Mammary epithelial cell (primary cell): ENCODE measurements at regions of chr5 and their contacts with region 1.

Region 1: GRCh38 chr5:140647042-140647341 is 438 bp downstream of the NDUFA2 start:
- DNase-seq: no peak
- H3K4me3 ChIP-seq: peak overlapping the region; percentile 81 to 88 (median 81)
- H3K27ac ChIP-seq: peak overlapping the region; percentile 75
- H3K4me1 ChIP-seq: peaks cover 15% of the 10 kb centered on the region
- H3K27me3 ChIP-seq: no peaks in the 10 kb centered on the region
- CTCF ChIP-seq: no peak

Region 2: GRCh38 chr5:140547508-140548299 is 99.3 kb before region 1 on chr5 and contains the start of gene EIF4EBP3:
- CTCF ChIA-PET with region 1: no interaction called
- dilution Hi-C with region 1: loop called (anchors 5 kb)
- in situ Hi-C with region 1: no loop called
- intact Hi-C with region 1: no loop called
- DNase-seq: peak; percentile 87
- H3K4me3 ChIP-seq: peak within 1 kb of the TSS in 2 of 3 experiments; percentile 34 to 55
- H3K27ac ChIP-seq: no peak within 1 kb of the TSS
- H3K4me1 ChIP-seq: peaks cover 13% of the 10 kb centered on the region
- H3K27me3 ChIP-seq: no peaks in the 10 kb centered on the region
- CTCF ChIP-seq: peak; percentile 51 to 69
- total RNA-seq, gene EIF4EBP3: 1.8 to 6.0 TPM

Region 3: DNA sequence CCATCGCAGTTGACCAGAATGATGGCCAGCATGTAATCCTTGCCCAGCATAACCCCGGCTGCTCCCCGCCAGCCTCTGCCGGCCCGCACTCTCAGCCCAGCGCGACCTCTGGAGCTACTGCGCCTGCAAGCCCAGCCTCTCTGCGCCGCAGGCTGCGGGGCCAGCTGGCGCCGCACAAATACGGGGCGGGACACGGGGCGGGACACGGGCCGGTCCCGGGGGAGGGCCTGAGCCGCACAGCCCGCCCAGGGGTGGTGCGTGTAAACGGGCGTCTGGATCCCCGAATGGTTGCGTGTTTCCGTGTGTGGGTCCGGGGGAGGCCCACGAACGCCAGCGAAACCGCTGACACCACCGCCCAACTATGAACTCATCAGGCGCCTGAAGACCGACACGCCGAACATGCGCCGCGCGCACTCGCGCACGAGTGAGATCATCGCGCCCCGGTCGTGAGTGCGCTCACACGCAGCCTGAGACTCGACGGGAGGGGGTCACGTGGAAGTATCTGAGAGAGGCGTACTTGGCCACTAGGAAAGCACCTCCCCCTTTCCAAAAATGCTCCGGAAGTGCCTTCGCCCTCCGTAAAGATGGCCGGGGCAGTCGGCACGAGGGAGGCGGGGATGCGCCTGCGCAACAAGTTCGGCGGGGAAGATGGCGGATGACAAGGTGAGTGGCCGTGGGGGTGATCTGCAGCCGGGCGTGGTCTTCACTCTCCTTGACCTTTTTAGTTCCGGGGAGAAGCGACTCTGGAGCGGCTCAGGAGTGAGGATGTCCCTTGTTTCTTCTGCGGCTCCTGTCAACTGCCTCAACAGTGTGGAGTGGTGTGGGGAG is 82.6 kb before region 1 on chr5 and contains the starts of genes APBB3 and SLC35A4:
- CTCF ChIA-PET with region 1: no interaction called
- dilution Hi-C with region 1: loop called (anchors 5 kb)
- in situ Hi-C with region 1: no loop called
- intact Hi-C with region 1: loop called (anchors 1 kb)
- DNase-seq: peak; percentile 96
- H3K4me3 ChIP-seq: peak within 1 kb of the TSS; percentile 88 to 92 (median 90)
- H3K27ac ChIP-seq: peak within 1 kb of the TSS; percentile 82
- H3K4me1 ChIP-seq: peaks cover 18% of the 10 kb centered on the region
- H3K27me3 ChIP-seq: no peaks in the 10 kb centered on the region
- CTCF ChIP-seq: no peak
- total RNA-seq, gene APBB3: 12.2 to 18.4 TPM
- total RNA-seq, gene SLC35A4: 24.0 to 62.2 TPM

Region 4: GRCh38 chr5:140664359-140665119 is 17.5 kb after region 1 on chr5 and contains the start of gene WDR55:
- CTCF ChIA-PET with region 1: no interaction called
- dilution Hi-C with region 1: no loop called
- in situ Hi-C with region 1: no loop called
- intact Hi-C with region 1: loop called (anchors 1 kb)
- DNase-seq: peak; percentile 93
- H3K4me3 ChIP-seq: peak within 1 kb of the TSS; percentile 80 to 87 (median 83)
- H3K27ac ChIP-seq: peak within 1 kb of the TSS; percentile 75
- H3K4me1 ChIP-seq: peaks cover 3% of the 10 kb centered on the region
- H3K27me3 ChIP-seq: no peaks in the 10 kb centered on the region
- CTCF ChIP-seq: no peak
- total RNA-seq, gene WDR55: 18.3 to 26.8 TPM

Region 5: DNA sequence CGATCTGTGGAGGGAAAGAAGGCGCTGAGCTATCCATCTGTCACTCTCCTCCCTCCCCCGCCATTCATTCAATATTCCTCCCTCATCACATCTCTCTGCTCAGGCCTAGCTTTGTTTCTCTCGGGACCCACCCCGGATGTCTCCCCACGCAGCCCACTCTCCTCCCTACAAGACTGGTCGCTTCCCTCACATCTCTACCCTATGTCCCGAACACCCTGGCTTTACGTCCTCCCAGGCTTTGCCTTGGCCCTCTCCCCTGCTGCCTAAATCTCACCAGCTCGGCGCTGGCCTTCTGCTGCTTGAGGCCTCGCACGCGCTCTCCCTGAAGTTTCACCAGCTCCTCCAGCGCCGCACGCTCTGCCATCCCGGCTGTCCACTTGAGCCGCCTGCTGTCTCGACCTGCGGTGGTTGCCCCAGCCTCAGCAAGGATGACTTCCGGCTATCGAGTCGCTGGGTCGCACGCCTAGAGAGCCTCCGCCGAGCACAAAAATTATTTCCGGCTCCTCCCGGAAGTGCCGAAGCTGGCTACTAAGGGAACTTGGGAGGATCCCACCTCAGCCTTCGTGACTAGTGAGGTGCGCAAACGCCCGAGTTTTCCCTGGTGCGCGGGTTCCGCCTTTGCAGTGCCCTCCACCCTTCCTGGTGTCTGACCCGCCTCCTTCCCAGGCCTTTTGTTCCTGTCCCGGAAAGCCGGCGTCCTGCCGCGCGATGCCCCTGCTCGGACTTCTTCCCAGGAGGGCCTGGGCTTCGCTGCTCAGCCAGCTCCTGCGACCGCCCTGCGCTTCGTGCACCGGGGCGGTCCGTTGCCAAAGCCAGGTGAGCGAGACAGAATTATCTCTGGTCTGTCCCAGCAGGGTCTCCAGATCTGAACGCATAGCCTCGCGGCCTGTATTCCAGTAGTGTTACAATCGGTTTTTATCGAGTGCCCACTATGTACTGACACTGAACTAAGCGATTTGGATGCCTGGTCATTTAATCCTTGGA is 44.2 kb after region 1 on chr5 and contains the starts of genes HARS1 and HARS2:
- CTCF ChIA-PET with region 1: no interaction called
- dilution Hi-C with region 1: loop called (anchors 5 kb)
- in situ Hi-C with region 1: no loop called
- intact Hi-C with region 1: loop called (anchors 5 kb)
- DNase-seq: peak; percentile 98
- H3K4me3 ChIP-seq: peak within 1 kb of the TSS; percentile 93 to 98 (median 95)
- H3K27ac ChIP-seq: peak within 1 kb of the TSS; percentile 66
- H3K4me1 ChIP-seq: peaks cover 4% of the 10 kb centered on the region
- H3K27me3 ChIP-seq: no peaks in the 10 kb centered on the region
- CTCF ChIP-seq: no peak
- total RNA-seq, gene HARS1: 60.3 to 104 TPM
- total RNA-seq, gene HARS2: 24.8 to 30.4 TPM

Region 6: GRCh38 chr5:140710899-140711552 is 64.0 kb after region 1 on chr5:
- CTCF ChIA-PET with region 1: no interaction called
- dilution Hi-C with region 1: no loop called
- in situ Hi-C with region 1: no loop called
- intact Hi-C with region 1: no loop called
- DNase-seq: peak; percentile 97
- H3K4me3 ChIP-seq: peak overlapping the region; percentile 48 to 55 (median 50)
- H3K27ac ChIP-seq: peak overlapping the region; percentile 67
- H3K4me1 ChIP-seq: no peaks in the 10 kb centered on the region
- H3K27me3 ChIP-seq: no peaks in the 10 kb centered on the region
- CTCF ChIP-seq: no peak